GM10248 (cell line): ENCODE measurements at regions of chr17 and their contacts with region 1.

Region 1: DNA sequence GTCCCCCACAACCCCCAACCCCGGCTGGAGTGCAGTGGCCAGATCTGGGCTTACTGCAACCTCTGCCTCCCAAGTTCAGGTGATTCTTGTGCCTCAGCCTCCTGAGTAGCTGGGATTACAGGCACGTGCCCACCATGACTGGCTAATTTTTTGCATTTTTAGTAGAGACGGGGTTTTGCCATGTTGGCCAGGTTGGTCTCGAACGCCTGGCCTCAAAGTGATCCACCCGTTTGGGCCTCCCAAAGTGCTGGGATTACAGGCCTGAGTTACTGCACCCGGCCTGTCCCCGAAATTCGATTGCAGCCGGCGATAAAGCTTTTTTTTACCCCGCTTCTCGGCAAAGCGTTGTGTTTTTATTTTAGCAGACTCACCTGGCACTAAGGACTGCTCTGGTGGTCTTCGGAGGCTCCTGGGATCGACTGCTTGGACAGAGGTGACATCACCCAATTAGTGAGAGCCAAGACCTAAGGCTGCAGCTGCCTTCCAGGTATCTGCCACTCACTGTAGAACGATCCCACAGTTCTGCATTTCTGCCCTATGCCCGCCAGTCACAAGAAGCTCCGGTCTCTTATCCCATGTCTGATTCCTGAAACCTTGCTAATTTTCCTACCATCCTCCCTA is 82.2 kb upstream of the ARL4D start:
- DNase-seq: no peak
- CTCF ChIP-seq: no peak

Region 2: DNA sequence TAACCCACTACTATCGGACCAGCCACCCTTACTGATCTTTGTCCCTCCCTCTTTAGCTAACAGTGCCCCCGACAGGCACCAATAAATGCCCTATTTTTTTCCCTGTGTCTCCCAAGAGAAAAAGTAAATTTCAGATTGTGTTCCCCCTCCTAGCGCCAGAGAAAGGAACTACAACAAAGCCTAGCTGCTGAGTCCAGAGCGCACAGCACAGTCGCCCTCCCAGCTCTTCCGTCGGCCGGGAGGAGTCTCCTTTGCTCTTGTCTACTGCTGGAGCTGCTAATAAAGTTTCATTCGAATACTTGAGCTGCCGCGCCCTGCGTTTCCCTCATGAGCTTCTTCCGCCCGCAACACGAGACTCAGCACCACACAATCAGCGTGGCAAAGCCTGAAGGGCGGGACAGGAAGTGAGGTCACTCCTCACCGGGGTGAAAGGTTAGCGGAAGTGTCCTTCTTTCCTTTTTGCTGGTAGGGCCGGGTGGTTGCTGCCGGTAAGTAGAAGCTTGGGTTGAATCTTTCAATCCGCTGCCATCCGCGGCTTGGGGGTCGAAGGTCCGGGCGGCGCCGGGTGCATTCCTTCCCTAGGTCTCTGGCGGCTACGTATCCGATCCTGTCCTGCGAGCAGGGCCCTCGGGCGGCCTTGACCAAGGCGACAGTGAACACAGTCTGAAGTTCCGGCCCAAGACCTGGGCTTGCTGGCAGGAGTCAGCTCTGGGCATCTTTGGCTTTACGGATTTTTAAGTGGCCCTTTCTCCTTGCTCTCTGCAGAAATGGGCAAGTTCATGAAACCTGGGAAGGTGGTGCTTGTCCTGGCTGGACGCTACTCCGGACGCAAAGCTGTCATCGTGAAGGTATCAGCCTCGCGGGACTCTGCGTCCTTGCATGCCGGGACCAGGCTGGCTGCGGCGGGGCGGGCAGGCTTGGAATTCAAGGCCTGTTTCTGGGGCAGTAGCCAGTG is 318.4 kb before region 1 on chr17 and contains the start of gene RPL27:
- CTCF ChIA-PET with region 1: no interaction called
- POLR2A ChIA-PET with region 1: interaction called, 15 read pairs
- DNase-seq: peak; percentile 95
- CTCF ChIP-seq: peak; percentile 65

Region 3: GRCh38 chr17:43211480-43212402 is 104.9 kb before region 1 on chr17 and contains the start of gene TMEM106A:
- CTCF ChIA-PET with region 1: interaction called, 5 read pairs
- POLR2A ChIA-PET with region 1: interaction called, 54 read pairs
- DNase-seq: peak; percentile 94
- CTCF ChIP-seq: peak; percentile 6

Region 4: GRCh38 chr17:43224146-43224695 is 92.4 kb before region 1 on chr17:
- CTCF ChIA-PET with region 1: no interaction called
- POLR2A ChIA-PET with region 1: interaction called, 11 read pairs
- DNase-seq: no peak
- CTCF ChIP-seq: no peak

Region 5: GRCh38 chr17:43367737-43368242 is 51.2 kb after region 1 on chr17:
- CTCF ChIA-PET with region 1: no interaction called
- POLR2A ChIA-PET with region 1: interaction called, 35 read pairs
- DNase-seq: peak; percentile 60
- CTCF ChIP-seq: no peak